Caco-2 (cell line): ENCODE measurements at regions of chr11 and their contacts with region 1.

Region 1: DNA sequence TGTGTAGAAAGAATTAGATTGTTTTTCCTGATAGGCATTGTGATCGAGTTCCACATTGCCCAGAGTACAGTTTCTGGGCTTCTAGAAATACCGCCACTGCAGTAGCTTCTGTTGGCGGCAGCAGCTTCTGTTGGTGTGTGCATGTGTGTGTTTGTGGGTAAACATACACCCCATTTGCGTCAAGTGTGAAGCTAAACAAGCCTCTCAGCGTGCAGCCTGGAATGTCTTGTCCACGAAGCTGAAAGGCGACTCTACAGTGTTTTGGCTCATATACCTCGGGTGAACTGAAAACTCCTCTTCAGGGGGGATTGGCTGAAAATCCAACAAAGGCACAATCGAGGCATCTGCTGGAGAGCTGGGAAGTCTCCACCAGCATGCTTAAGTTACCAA is 112.0 kb upstream of the E2F8 start:
- DNase-seq: no peak
- H3K4me3 ChIP-seq: no peak overlapping the region
- H3K4me3 Mint-ChIP-seq: no peak overlapping the region
- H3K27ac Mint-ChIP-seq: no peak overlapping the region
- H3K4me1 ChIP-seq: peaks cover 13% of the 10 kb centered on the region
- H3K4me1 Mint-ChIP-seq: peaks cover 7% of the 10 kb centered on the region
- H3K27me3 ChIP-seq: no peaks in the 10 kb centered on the region
- H3K27me3 Mint-ChIP-seq: no peaks in the 10 kb centered on the region
- CTCF ChIP-seq: no peak

Region 2: GRCh38 chr11:19370100-19370861 is 17.5 kb after region 1 on chr11:
- CTCF ChIA-PET with region 1: no interaction called
- POLR2A ChIA-PET with region 1: no interaction called
- intact Hi-C with region 1: loop called (anchors 2 kb)
- DNase-seq: peak; percentile 48 to 64
- H3K4me3 ChIP-seq: no peak overlapping the region
- H3K4me3 Mint-ChIP-seq: peak overlapping the region; percentile 15
- H3K27ac Mint-ChIP-seq: peak overlapping the region; percentile 25
- H3K4me1 ChIP-seq: peaks cover 19% of the 10 kb centered on the region
- H3K4me1 Mint-ChIP-seq: peaks cover 12% of the 10 kb centered on the region
- H3K27me3 ChIP-seq: no peaks in the 10 kb centered on the region
- H3K27me3 Mint-ChIP-seq: no peaks in the 10 kb centered on the region
- CTCF ChIP-seq: no peak

Region 3: DNA sequence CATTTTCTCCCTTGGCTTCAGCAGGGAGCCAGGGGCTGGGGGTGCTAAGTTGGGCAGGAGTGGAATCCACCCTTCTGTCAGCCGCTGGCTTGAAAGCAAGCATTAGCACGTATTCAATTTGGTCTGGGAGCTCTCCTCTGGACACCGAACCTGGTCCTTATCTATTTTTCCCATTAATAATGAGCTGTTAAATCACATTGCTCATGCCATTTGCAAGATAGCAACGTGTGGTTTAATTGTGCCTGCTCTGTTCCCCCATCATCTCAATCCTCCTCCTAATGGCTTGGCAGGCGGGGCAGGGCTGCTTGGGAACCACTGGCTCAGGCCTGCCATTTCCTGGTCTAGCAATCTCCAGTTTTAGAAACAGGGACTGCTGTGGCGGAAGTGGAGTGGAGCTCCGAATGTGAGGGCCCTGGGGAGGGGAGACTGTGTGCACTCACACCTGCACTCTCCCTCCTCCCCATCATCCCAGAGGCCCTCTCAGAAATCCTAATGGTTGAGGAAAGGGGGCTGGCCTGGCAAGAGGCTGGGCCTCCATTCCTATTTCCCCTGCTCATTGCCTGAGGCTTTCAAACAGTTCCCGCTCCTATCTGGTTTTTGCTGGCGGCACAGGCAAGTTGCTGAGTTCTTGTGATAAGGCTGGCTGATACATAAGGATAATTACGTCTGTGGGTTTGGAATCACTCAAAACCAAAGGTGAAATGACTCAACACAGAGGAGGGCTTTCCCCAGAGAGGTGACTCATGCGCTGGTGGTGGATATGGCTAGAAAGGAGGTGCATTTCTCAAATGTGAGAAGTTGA is 89.2 kb after region 1 on chr11:
- CTCF ChIA-PET with region 1: no interaction called
- POLR2A ChIA-PET with region 1: interaction called, 19 read pairs
- intact Hi-C with region 1: no loop called
- DNase-seq: peak; percentile 67 to 79
- H3K4me3 ChIP-seq: no peak overlapping the region
- H3K4me3 Mint-ChIP-seq: no peak overlapping the region
- H3K27ac Mint-ChIP-seq: peak overlapping the region; percentile 82
- H3K4me1 ChIP-seq: peaks cover 26% of the 10 kb centered on the region
- H3K4me1 Mint-ChIP-seq: peaks cover 36% of the 10 kb centered on the region
- H3K27me3 ChIP-seq: no peaks in the 10 kb centered on the region
- H3K27me3 Mint-ChIP-seq: no peaks in the 10 kb centered on the region
- CTCF ChIP-seq: no peak